Naive thymus-derived CD4-positive, alpha-beta T cell (primary cell): ENCODE measurements at regions of chrX and their contacts with region 1.

Region 1: GRCh38 chrX:19887911-19888879 is 795 bp upstream of the SH3KBP1 start:
- DNase-seq: peak; percentile 14 to 64 (median 54)
- ATAC-seq: peak; percentile 61
- H3K4me3 ChIP-seq: peak overlapping the region; percentile 55
- H3K4me3 Mint-ChIP-seq: peak overlapping the region; percentile 78 to 86 (median 82)
- H3K27ac ChIP-seq: peak overlapping the region; percentile 68
- H3K27ac Mint-ChIP-seq: peak overlapping the region; percentile 74 to 95 (median 89)
- H3K4me1 ChIP-seq: peaks cover 5 to 7% of the 10 kb centered on the region in 2 donors
- H3K4me1 Mint-ChIP-seq: peaks cover 17 to 40% (median 36%) of the 10 kb centered on the region in 7 donors
- H3K27me3 ChIP-seq: no peaks in the 10 kb centered on the region
- H3K27me3 Mint-ChIP-seq: no peaks in the 10 kb centered on the region

Region 2: GRCh38 chrX:19382555-19383145 is 505.5 kb before region 1 on chrX:
- CTCF ChIA-PET with region 1: interaction called, 3 read pairs
- POLR2A ChIA-PET with region 1: no interaction called
- intact Hi-C with region 1: loop called in 1 of 2 experiments (anchors 1 kb)
- DNase-seq: peak in 8 of 9 donors; percentile 14 to 50 (median 36)
- ATAC-seq: peak; percentile 80
- H3K4me3 ChIP-seq: no peak overlapping the region
- H3K4me3 Mint-ChIP-seq: no peak overlapping the region
- H3K27ac ChIP-seq: no peak overlapping the region
- H3K27ac Mint-ChIP-seq: no peak overlapping the region
- H3K4me1 ChIP-seq: no peaks in the 10 kb centered on the region
- H3K4me1 Mint-ChIP-seq: peaks cover 0 to 3% (median 0%) of the 10 kb centered on the region in 7 donors
- H3K27me3 ChIP-seq: no peaks in the 10 kb centered on the region
- H3K27me3 Mint-ChIP-seq: peaks cover 0 to 6% (median 0%) of the 10 kb centered on the region in 5 donors

Region 3: GRCh38 chrX:19593690-19594089 is 294.5 kb before region 1 on chrX:
- CTCF ChIA-PET with region 1: interaction called, 4 read pairs
- POLR2A ChIA-PET with region 1: no interaction called
- intact Hi-C with region 1: loop called (anchors 1 kb)
- DNase-seq: peak in 7 of 9 donors; percentile 11 to 36 (median 21)
- ATAC-seq: peak; percentile 50
- H3K4me3 ChIP-seq: no peak overlapping the region
- H3K4me3 Mint-ChIP-seq: no peak overlapping the region
- H3K27ac ChIP-seq: no peak overlapping the region
- H3K27ac Mint-ChIP-seq: peak overlapping the region in 3 of 9 donors; percentile 10 to 66 (median 56)
- H3K4me1 ChIP-seq: no peaks in the 10 kb centered on the region
- H3K4me1 Mint-ChIP-seq: peaks cover 0 to 21% (median 10%) of the 10 kb centered on the region in 7 donors
- H3K27me3 ChIP-seq: no peaks in the 10 kb centered on the region
- H3K27me3 Mint-ChIP-seq: no peaks in the 10 kb centered on the region

Region 4: DNA sequence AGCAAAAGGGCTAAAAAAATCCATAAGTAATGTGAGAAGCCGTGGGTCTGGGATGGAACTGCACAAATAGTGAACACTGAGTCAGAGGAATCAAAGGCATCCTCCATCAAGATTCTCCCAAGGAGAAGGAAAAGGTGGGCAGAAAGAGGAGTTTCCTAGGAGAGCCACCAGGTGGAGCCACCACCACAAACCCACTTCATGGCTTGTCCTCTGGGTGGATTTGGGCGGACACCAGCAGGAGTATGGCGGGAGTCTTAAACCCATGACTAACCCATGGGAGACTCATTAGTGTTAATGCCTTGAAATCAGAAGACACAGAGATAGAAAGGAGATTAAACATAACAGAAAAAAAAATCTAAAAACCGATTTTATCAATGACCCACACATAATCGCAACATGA is 148.5 kb before region 1 on chrX:
- CTCF ChIA-PET with region 1: interaction called, 4 read pairs
- POLR2A ChIA-PET with region 1: interaction called, 3 read pairs
- intact Hi-C with region 1: loop called (anchors 1 kb)
- DNase-seq: peak in 4 of 9 donors; percentile 12 to 33 (median 27)
- ATAC-seq: peak; percentile 72
- H3K4me3 ChIP-seq: no peak overlapping the region
- H3K4me3 Mint-ChIP-seq: peak overlapping the region in 7 of 10 donors; percentile 4 to 75 (median 43)
- H3K27ac ChIP-seq: peak overlapping the region; percentile 0
- H3K27ac Mint-ChIP-seq: peak overlapping the region; percentile 34 to 90 (median 82)
- H3K4me1 ChIP-seq: peaks cover 49 to 52% of the 10 kb centered on the region in 2 donors
- H3K4me1 Mint-ChIP-seq: peaks cover 36 to 87% (median 73%) of the 10 kb centered on the region in 7 donors
- H3K27me3 ChIP-seq: no peaks in the 10 kb centered on the region
- H3K27me3 Mint-ChIP-seq: no peaks in the 10 kb centered on the region

Region 5: DNA sequence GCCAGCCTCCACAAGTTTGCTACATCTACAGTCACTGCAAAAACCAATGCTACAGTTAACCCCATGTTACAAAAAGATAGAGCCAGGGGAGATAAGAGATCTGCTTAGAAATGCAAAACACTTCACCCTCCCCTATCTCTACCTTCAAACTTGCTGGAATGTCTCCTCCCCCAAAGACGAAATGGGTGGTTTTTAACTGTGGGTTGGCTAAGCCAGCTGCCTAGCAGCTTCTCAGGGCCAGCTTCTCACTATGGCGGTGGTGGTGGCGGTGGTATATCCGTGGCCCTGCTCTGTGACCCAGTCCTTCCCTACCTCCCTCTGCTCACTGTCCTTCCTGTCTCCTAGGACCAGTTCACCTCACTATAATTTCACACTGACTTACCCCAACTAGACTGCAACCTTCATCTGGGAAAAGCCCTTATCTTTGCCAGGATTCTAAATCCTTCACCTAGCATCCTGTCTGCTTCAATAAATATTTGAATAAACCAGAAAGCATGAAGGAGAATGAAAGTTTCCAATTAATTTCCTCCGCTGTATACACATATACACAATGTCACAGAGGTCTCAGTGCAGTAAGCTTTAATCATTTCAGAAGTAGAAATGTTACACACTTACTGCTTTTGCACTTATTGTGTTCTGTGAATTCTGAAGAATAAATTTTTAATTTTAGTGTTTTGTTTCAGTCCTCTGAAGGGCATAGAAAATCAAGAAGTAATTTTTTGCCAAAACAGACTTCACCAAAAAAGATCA is 47.1 kb before region 1 on chrX:
- CTCF ChIA-PET with region 1: no interaction called
- POLR2A ChIA-PET with region 1: interaction called, 5 read pairs
- intact Hi-C with region 1: loop called (anchors 2 kb)
- DNase-seq: peak in 7 of 9 donors; percentile 12 to 48 (median 37)
- ATAC-seq: peak; percentile 87
- H3K4me3 ChIP-seq: peak overlapping the region; percentile 11
- H3K4me3 Mint-ChIP-seq: peak overlapping the region; percentile 22 to 87 (median 78)
- H3K27ac ChIP-seq: peak overlapping the region; percentile 32
- H3K27ac Mint-ChIP-seq: peak overlapping the region; percentile 73 to 94 (median 88)
- H3K4me1 ChIP-seq: peaks cover 7 to 22% of the 10 kb centered on the region in 2 donors
- H3K4me1 Mint-ChIP-seq: peaks cover 20 to 75% (median 65%) of the 10 kb centered on the region in 7 donors
- H3K27me3 ChIP-seq: no peaks in the 10 kb centered on the region
- H3K27me3 Mint-ChIP-seq: no peaks in the 10 kb centered on the region